Activated naive CD4-positive, alpha-beta T cell treated with anti-CD3 and anti-CD28 coated beads for 36 hours (primary cell): ENCODE measurements at regions of chr3 and their contacts with region 1.

Region 1: GRCh38 chr3:129026728-129027543 is 25.8 kb downstream of the EFCC1 start:
- DNase-seq: peak; percentile 96
- H3K4me3 Mint-ChIP-seq: peak overlapping the region; percentile 77
- H3K27ac Mint-ChIP-seq: peak overlapping the region; percentile 82
- H3K4me1 Mint-ChIP-seq: peaks cover 7% of the 10 kb centered on the region
- H3K27me3 Mint-ChIP-seq: no peaks in the 10 kb centered on the region

Region 2: DNA sequence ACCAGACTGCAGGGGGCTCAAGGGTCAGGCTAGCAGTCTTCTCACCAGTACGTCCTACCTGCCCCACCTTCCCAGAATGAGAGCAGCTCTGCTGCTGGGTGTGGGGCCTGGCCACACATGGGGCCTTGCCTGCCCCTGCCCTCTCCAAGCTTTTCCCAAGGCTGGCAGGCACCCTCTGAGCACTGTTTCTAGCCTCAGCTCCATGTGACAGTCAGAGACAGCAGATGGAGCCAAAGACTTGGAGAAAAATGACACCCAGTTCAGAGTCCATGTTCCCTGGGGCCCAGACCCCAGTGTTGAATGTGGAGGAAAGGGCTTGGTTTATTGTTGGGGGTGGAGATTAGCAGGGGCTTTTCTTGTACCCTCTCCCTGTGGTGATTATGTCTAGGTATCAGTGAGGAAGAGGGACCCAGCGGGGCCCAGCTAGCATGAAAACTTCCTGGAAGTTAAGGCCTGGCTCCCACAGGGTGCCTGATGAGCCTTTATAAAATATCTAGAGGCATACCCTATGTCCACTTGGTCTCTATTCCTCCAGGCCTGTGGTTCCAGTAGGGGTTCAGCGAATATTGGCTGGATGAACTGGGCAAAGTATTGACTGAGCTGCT is 719.8 kb before region 1 on chr3:
- CTCF ChIA-PET with region 1: no interaction called
- intact Hi-C with region 1: no loop called
- DNase-seq: no peak
- H3K4me3 Mint-ChIP-seq: no peak overlapping the region
- H3K27ac Mint-ChIP-seq: no peak overlapping the region
- H3K4me1 Mint-ChIP-seq: peaks cover 10% of the 10 kb centered on the region
- H3K27me3 Mint-ChIP-seq: no peaks in the 10 kb centered on the region

Region 3: GRCh38 chr3:128736601-128737000 is 290.3 kb before region 1 on chr3:
- CTCF ChIA-PET with region 1: no interaction called
- intact Hi-C with region 1: no loop called
- DNase-seq: no peak
- H3K4me3 Mint-ChIP-seq: no peak overlapping the region
- H3K27ac Mint-ChIP-seq: no peak overlapping the region
- H3K4me1 Mint-ChIP-seq: peaks cover 59% of the 10 kb centered on the region
- H3K27me3 Mint-ChIP-seq: no peaks in the 10 kb centered on the region

Region 4: GRCh38 chr3:128993461-128994173 is 33.3 kb before region 1 on chr3 and contains the start of gene CFAP92:
- CTCF ChIA-PET with region 1: interaction called, 8 read pairs
- intact Hi-C with region 1: loop called (anchors 2 kb)
- DNase-seq: peak; percentile 95
- H3K4me3 Mint-ChIP-seq: peak within 1 kb of the TSS; percentile 68
- H3K27ac Mint-ChIP-seq: no peak within 1 kb of the TSS
- H3K4me1 Mint-ChIP-seq: peaks cover 25% of the 10 kb centered on the region
- H3K27me3 Mint-ChIP-seq: no peaks in the 10 kb centered on the region
- total RNA-seq, gene CFAP92: 0.32 to 0.48 TPM

Region 5: GRCh38 chr3:129016356-129016719 is 10.6 kb before region 1 on chr3:
- CTCF ChIA-PET with region 1: interaction called, 64 read pairs
- intact Hi-C with region 1: loop called (anchors 1 kb)
- DNase-seq: peak; percentile 88
- H3K4me3 Mint-ChIP-seq: peak overlapping the region; percentile 73
- H3K27ac Mint-ChIP-seq: peak overlapping the region; percentile 95
- H3K4me1 Mint-ChIP-seq: peaks cover 38% of the 10 kb centered on the region
- H3K27me3 Mint-ChIP-seq: no peaks in the 10 kb centered on the region

Region 6: DNA sequence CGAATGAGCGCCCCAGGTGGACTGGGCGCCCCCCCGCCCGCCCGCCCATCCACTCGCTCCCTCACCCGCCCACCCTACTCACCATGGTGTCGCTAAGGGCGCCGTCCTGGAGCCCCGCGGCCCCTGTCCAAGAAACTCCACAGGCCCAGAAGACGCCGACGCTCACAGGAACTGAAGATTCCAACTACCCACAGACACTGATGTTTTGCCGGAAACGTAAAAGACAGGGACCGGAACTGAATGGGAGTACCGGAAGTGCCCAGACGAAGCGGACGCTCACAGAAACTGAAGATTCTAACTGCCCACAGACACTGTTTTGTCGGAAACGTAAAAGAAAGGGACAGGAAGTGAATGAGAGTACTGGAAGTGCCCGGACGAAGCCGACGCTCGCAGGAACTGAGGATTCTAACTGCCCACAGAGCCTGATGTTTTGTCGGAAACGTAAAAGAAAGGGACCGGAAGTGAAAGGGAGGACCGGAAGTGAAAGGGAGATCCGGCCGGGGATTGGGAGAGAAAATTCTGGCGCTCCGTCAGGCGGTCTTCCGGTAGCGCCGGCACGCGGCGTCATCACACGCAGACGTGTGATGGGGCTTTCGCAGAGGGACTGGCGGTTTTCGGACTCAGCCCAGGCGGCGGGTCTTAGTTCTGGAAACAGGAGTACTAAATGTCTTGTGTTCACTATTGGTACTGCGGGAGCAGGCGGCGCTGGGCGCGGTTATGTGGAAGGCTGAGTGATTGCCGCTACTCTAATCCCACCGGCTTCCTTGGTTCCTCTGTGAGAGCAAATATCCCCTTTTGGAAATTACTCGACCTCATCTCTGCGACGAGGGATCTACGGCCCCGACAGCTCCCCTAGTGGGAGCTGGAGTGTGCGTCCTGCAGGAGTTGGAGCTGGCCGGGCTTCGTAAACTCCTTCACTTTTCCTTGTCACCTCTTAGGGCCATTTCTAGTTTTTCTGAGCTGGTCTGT is 134.2 kb after region 1 on chr3 and contains the start of gene ISY1:
- CTCF ChIA-PET with region 1: interaction called, 8 read pairs
- intact Hi-C with region 1: loop called (anchors 1 kb)
- DNase-seq: peak; percentile 91
- H3K4me3 Mint-ChIP-seq: peak within 1 kb of the TSS; percentile 87
- H3K27ac Mint-ChIP-seq: peak within 1 kb of the TSS; percentile 99
- H3K4me1 Mint-ChIP-seq: peaks cover 31% of the 10 kb centered on the region
- H3K27me3 Mint-ChIP-seq: no peaks in the 10 kb centered on the region
- total RNA-seq, gene ISY1: 56.8 to 65.4 TPM

Region 7: GRCh38 chr3:129249276-129250065 is 222.5 kb after region 1 on chr3 and contains the start of gene COPG1:
- CTCF ChIA-PET with region 1: interaction called, 6 read pairs
- intact Hi-C with region 1: loop called (anchors 1 kb)
- DNase-seq: peak; percentile 86
- H3K4me3 Mint-ChIP-seq: peak within 1 kb of the TSS; percentile 95
- H3K27ac Mint-ChIP-seq: peak within 1 kb of the TSS; percentile 89
- H3K4me1 Mint-ChIP-seq: peaks cover 33% of the 10 kb centered on the region
- H3K27me3 Mint-ChIP-seq: no peaks in the 10 kb centered on the region
- total RNA-seq, gene COPG1: 125 to 128 TPM

Region 8: GRCh38 chr3:130111185-130111864 is 1084.4 kb after region 1 on chr3:
- CTCF ChIA-PET with region 1: no interaction called
- intact Hi-C with region 1: no loop called
- DNase-seq: peak; percentile 99
- H3K4me3 Mint-ChIP-seq: peak overlapping the region; percentile 92
- H3K27ac Mint-ChIP-seq: peak overlapping the region; percentile 95
- H3K4me1 Mint-ChIP-seq: peaks cover 18% of the 10 kb centered on the region
- H3K27me3 Mint-ChIP-seq: no peaks in the 10 kb centered on the region